CD4-positive, alpha-beta memory T cell (primary cell): ENCODE measurements at regions of chr16 and their contacts with region 1.

Region 1: GRCh38 chr16:87765776-87766484 is at the start of gene KLHDC4:
- DNase-seq: peak; percentile 87 to 91 (median 88)
- H3K4me3 ChIP-seq: peak within 1 kb of the TSS; percentile 7 to 80
- H3K4me3 Mint-ChIP-seq: peak within 1 kb of the TSS; percentile 97 to 100 (median 100)
- H3K27ac ChIP-seq: peak within 1 kb of the TSS; percentile 85
- H3K27ac Mint-ChIP-seq: peak within 1 kb of the TSS; percentile 98 to 100 (median 99)
- H3K4me1 ChIP-seq: peaks cover 44% of the 10 kb centered on the region
- H3K4me1 Mint-ChIP-seq: peaks cover 25 to 51% (median 39%) of the 10 kb centered on the region in 4 donors
- H3K27me3 ChIP-seq: no peaks in the 10 kb centered on the region
- H3K27me3 Mint-ChIP-seq: no peaks in the 10 kb centered on the region
- total RNA-seq, gene KLHDC4: 82.4 to 90.0 TPM

Region 2: DNA sequence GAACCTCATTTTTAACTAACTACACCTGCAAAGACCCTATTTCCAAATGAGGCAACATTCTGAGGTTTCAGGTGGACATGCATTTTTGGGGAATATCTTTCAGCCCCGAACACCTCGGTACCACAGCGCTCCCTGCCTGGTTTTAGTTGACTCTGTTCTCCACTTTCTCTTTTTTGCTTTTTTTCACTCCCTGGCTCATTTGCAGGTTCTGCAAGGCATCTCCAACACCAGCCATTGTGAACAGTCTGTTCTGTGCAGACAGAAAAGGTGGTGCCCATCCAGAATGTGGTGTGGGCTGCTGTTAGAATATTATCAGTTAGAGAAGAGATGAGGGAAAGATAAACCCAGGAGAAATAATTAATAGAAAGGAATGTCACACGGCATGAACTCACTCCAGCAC is 240.6 kb before region 1 on chr16:
- CTCF ChIA-PET with region 1: no interaction called
- POLR2A ChIA-PET with region 1: no interaction called
- intact Hi-C with region 1: no loop called
- DNase-seq: no peak
- H3K4me3 ChIP-seq: no peak overlapping the region
- H3K4me3 Mint-ChIP-seq: no peak overlapping the region
- H3K27ac ChIP-seq: no peak overlapping the region
- H3K27ac Mint-ChIP-seq: no peak overlapping the region
- H3K4me1 ChIP-seq: no peaks in the 10 kb centered on the region
- H3K4me1 Mint-ChIP-seq: no peaks in the 10 kb centered on the region
- H3K27me3 ChIP-seq: no peaks in the 10 kb centered on the region
- H3K27me3 Mint-ChIP-seq: peaks cover 10 to 27% of the 10 kb centered on the region in 2 donors

Region 3: GRCh38 chr16:87602821-87603683 is 162.9 kb before region 1 on chr16:
- CTCF ChIA-PET with region 1: no interaction called
- POLR2A ChIA-PET with region 1: no interaction called
- intact Hi-C with region 1: no loop called
- DNase-seq: no peak
- H3K4me3 ChIP-seq: no peak overlapping the region
- H3K4me3 Mint-ChIP-seq: peak overlapping the region in 7 of 8 donors; percentile 28 to 73 (median 48)
- H3K27ac ChIP-seq: no peak overlapping the region
- H3K27ac Mint-ChIP-seq: no peak overlapping the region
- H3K4me1 ChIP-seq: no peaks in the 10 kb centered on the region
- H3K4me1 Mint-ChIP-seq: peaks cover 3 to 19% (median 7%) of the 10 kb centered on the region in 4 donors
- H3K27me3 ChIP-seq: peaks cover 12% of the 10 kb centered on the region
- H3K27me3 Mint-ChIP-seq: peaks cover 59% of the 10 kb centered on the region in 2 donors

Region 4: DNA sequence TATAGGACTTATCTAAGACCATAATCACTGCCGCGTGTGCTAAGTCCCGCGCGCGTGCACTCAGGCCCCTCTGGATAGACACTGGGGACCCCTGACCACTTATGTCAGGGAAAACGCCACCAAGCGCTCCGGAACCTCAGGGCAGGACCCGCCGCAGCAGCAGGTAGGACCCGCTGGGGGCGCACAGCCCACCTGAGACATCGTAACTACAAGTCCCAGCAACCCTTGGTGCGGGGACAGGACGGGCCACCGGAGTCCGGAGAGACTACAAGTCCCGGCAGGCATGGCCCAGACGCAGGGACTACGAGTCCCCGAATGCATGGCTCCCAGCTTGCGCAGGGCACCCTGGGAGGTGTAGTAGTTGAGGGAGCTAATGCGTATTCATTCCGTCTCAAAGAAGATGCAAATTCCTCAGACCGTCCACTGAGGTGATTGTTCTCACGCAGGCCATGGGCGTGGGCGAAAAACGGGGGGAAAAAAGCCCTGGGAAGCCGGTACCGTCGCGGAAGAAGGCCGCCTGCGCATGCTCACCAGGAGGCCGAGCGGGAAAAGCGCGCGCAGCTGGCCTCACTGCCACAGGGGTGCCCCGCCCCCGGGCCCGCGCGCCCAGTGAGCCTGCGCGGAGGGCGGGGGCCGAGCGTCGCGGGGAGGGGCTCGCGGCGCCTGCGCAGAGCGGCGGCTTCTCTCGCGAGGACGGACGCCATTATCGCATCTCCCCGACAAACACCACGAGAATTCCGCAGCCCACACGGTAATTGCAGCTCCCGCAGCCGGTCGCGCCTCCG is 185.0 kb after region 1 on chr16 and contains the start of gene BANP:
- CTCF ChIA-PET with region 1: interaction called, 3 read pairs
- POLR2A ChIA-PET with region 1: interaction called, 11 read pairs
- intact Hi-C with region 1: loop called (anchors 1 kb)
- DNase-seq: peak; percentile 98 to 99 (median 99)
- H3K4me3 ChIP-seq: peak within 1 kb of the TSS; percentile 89 to 90
- H3K4me3 Mint-ChIP-seq: peak within 1 kb of the TSS; percentile 97 to 100 (median 99)
- H3K27ac ChIP-seq: peak within 1 kb of the TSS; percentile 74
- H3K27ac Mint-ChIP-seq: peak within 1 kb of the TSS; percentile 98 to 100 (median 100)
- H3K4me1 ChIP-seq: peaks cover 43% of the 10 kb centered on the region
- H3K4me1 Mint-ChIP-seq: peaks cover 23 to 49% (median 39%) of the 10 kb centered on the region in 4 donors
- H3K27me3 ChIP-seq: no peaks in the 10 kb centered on the region
- H3K27me3 Mint-ChIP-seq: peaks cover 0 to 2% of the 10 kb centered on the region in 2 donors
- total RNA-seq, gene BANP: 61.8 to 72.7 TPM